Naive thymus-derived CD4-positive, alpha-beta T cell (primary cell): ENCODE measurements at regions of chr1 and their contacts with region 1.

Region 1: DNA sequence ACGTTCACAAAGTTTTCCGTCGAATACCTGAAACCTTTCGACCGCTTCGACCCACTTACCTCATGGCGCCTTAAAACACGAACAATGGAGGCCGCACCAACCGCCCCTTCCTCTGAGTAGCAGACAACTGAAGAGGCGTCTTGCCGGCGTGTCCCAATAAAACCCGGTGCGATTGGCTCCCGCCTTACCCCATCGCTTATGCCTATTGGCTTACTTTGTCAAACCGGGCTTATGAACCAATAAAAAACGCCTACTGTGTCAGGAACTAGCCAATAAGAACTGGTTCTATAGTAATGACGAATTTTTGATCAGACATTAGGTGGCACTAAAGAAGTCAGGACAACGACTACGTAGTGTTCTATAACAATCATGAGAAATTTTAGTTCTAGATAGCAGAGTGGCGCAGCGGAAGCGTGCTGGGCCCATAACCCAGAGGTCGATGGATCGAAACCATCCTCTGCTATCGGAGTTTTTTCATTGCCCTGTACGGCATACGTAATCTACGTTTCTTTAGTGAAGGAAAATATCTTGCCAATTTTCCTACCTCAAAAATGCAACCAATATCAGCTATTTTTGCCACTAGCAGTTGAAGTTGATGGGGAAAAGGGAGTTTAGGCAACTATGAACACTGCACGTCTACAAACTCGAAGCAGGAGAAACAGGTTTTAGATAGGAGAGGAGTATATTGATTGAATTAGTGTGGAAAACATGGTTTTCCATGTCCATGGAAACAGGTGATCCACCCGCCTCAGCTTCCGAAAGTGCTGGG is at the start of gene ILF2:
- DNase-seq: peak; percentile 85 to 100 (median 98)
- ATAC-seq: peak; percentile 93
- H3K4me3 ChIP-seq: peak within 1 kb of the TSS; percentile 94
- H3K4me3 Mint-ChIP-seq: no peak within 1 kb of the TSS
- H3K27ac ChIP-seq: peak within 1 kb of the TSS; percentile 93
- H3K27ac Mint-ChIP-seq: peak within 1 kb of the TSS in 2 of 9 donors; percentile 62 to 73
- H3K4me1 ChIP-seq: peaks cover 18 to 19% of the 10 kb centered on the region in 2 donors
- H3K4me1 Mint-ChIP-seq: peaks cover 11 to 28% (median 17%) of the 10 kb centered on the region in 7 donors
- H3K27me3 ChIP-seq: no peaks in the 10 kb centered on the region
- H3K27me3 Mint-ChIP-seq: peaks cover 0 to under 1% (median 0%) of the 10 kb centered on the region in 5 donors
- total RNA-seq, gene ILF2: 83.6 to 177 (median 113) TPM

Region 2: GRCh38 chr1:153565331-153566131 is 105.5 kb before region 1 on chr1 and contains the start of gene S100A2:
- CTCF ChIA-PET with region 1: no interaction called
- POLR2A ChIA-PET with region 1: no interaction called
- intact Hi-C with region 1: no loop called
- DNase-seq: peak in 1 of 9 donors; percentile 48
- ATAC-seq: peak; percentile 69
- H3K4me3 ChIP-seq: no peak within 1 kb of the TSS
- H3K4me3 Mint-ChIP-seq: peak within 1 kb of the TSS in 7 of 10 donors; percentile 32 to 81 (median 56)
- H3K27ac ChIP-seq: peak within 1 kb of the TSS; percentile 17
- H3K27ac Mint-ChIP-seq: peak within 1 kb of the TSS; percentile 56 to 98 (median 85)
- H3K4me1 ChIP-seq: peaks cover 12 to 13% of the 10 kb centered on the region in 2 donors
- H3K4me1 Mint-ChIP-seq: peaks cover 25 to 36% (median 28%) of the 10 kb centered on the region in 7 donors
- H3K27me3 ChIP-seq: no peaks in the 10 kb centered on the region
- H3K27me3 Mint-ChIP-seq: no peaks in the 10 kb centered on the region
- total RNA-seq, gene S100A2: 1.1 TPM in 1 of 5 experiments, not detected in the others

Region 3: DNA sequence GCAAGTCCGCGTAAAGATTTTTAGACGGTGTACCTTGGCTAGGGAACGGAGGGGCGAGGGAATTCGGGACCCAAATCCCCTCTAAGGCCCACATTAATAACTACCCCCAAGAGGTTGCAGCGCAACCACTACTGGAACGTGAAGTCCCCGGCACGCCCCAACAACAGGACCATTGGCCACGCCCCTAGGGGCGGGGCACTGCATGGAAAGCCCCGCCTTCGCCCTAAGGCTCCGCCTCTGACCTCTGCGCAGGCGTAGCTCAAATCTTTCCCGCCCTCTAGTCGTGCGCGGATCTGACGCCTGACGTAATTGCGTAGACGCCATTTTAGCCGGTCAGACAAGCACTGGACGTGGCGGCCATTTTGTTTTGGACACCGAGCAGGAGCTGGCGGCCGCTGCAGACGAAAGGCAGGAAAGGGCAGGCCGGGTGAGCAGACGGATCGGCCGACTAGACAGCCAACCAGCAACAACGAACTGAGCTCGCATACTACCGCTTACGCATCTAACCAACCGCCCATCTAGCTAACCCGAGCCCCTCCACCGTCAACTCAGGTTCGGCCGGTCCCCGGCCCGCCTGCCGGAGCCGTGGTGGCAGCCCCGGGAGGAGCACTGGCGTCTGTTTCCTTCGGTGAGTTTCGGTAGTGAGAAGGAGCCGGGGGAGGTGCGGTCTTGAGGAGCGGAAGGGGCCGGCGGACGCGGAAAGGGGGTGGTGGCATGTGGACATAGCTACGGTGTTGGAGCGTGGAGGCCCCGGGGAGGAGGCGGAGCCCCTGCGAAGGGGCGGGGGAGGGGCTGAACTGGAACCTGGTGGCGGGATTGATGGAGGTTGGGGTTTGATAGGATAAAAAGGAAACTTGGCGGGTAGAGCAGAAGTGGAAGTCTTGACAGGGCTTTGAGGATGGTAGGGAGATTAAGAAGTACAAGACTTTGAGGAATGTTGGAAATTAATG is 37.1 kb before region 1 on chr1 and contains the start of gene CHTOP:
- CTCF ChIA-PET with region 1: interaction called, 3 read pairs
- POLR2A ChIA-PET with region 1: interaction called, 21 read pairs
- intact Hi-C with region 1: loop called (anchors 1 kb)
- DNase-seq: peak; percentile 96 to 99 (median 96)
- ATAC-seq: peak; percentile 95
- H3K4me3 ChIP-seq: peak within 1 kb of the TSS; percentile 99
- H3K4me3 Mint-ChIP-seq: peak within 1 kb of the TSS; percentile 97 to 100 (median 99)
- H3K27ac ChIP-seq: peak within 1 kb of the TSS; percentile 98
- H3K27ac Mint-ChIP-seq: peak within 1 kb of the TSS; percentile 98 to 100 (median 100)
- H3K4me1 ChIP-seq: peaks cover 11 to 25% of the 10 kb centered on the region in 2 donors
- H3K4me1 Mint-ChIP-seq: peaks cover 30 to 52% (median 41%) of the 10 kb centered on the region in 7 donors
- H3K27me3 ChIP-seq: no peaks in the 10 kb centered on the region
- H3K27me3 Mint-ChIP-seq: peaks cover 0 to 3% (median 0%) of the 10 kb centered on the region in 5 donors
- total RNA-seq, gene CHTOP: 85.2 to 143 (median 116) TPM

Region 4: DNA sequence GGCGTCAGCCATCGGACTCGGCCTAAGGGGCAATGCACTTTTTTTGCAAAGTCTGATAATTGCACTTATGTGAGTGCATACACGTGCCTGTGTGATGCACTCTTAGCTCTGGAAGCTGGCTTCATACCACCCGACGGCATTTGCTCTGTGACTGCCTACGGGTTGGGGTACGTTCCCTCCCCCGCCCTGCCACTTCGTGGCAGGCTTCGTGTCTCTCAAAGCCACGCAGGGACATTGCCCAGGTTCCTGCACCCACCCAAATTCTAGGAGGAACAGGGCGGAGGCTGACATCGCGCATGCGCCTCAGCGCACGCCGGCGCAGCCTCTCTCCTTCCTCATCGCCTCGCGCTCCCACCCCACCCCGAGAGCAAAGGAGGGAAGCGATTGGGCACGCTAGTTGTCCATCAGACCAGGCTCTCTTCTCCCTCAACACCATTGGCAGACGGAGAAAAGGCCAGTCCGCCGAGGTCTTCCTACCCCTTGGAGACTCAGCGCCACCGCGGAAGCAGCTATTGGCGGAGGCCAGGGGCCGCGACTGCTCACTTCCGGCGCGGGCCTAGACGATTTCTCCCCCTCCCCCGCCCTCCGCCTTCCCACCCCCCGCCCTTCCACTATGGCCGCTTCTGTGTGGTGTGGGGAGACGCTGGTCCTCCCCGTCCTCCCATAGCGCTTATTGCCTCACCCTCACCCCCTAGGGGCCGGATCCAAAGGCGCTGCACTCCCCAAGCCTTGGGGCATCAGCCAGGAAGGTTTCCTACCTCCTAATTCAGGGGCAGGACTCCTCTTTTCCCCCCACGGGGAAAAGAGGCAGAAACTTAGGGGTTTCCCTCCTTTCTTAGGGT is 56.6 kb after region 1 on chr1 and contains the start of gene INTS3:
- CTCF ChIA-PET with region 1: interaction called, 4 read pairs
- POLR2A ChIA-PET with region 1: interaction called, 10 read pairs
- intact Hi-C with region 1: loop called (anchors 1 kb)
- DNase-seq: peak; percentile 84 to 100 (median 99)
- ATAC-seq: peak; percentile 99
- H3K4me3 ChIP-seq: peak within 1 kb of the TSS; percentile 92
- H3K4me3 Mint-ChIP-seq: peak within 1 kb of the TSS; percentile 82 to 97 (median 92)
- H3K27ac ChIP-seq: peak within 1 kb of the TSS; percentile 94
- H3K27ac Mint-ChIP-seq: peak within 1 kb of the TSS; percentile 89 to 98 (median 95)
- H3K4me1 ChIP-seq: peaks cover 11 to 15% of the 10 kb centered on the region in 2 donors
- H3K4me1 Mint-ChIP-seq: peaks cover 7 to 35% (median 32%) of the 10 kb centered on the region in 7 donors
- H3K27me3 ChIP-seq: no peaks in the 10 kb centered on the region
- H3K27me3 Mint-ChIP-seq: peaks cover 0 to 2% (median 0%) of the 10 kb centered on the region in 5 donors
- total RNA-seq, gene INTS3: 43.6 to 68.1 (median 56.8) TPM

Region 5: DNA sequence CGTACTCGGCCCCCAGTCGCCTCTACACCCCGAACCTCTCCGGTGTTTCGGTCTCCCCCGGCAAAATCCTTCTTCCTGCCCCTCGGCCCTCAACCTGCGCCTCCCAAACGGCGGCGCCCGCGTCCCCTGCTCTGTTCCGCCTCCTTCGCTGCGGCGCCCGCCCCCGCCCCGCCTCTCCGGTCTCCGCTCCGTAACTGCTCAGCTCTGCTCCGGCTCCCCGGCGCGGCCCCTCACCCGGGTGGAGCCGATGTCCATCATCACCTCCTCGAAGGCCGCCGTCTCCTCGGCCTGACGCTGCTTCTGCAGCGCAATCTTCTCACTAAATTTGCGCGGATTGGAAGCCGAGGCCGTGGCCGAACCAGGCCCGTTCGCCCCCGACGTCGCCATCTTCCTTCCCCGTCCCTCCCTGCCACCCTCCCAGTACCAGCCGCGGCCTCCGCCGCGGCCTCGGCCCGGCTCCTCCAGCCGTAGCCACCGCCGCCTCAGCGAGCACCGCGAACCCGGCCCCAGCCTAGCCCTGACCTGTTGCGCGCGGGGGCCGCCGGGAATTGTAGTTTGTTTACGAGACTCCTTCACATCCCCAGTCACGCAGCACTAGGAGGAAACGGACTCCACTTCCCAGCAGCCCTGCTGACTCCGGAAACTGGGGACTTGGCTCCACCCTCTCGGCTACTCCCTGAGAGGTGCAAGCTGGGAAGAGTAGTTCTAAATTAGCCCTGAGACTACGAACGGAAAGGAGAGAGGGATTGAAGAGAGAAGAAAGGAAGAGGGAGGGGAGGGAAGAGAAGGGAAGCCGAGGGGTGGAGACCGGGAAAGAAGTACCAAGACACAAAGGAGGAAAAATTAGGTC is 287.3 kb after region 1 on chr1 and contains the start of gene CRTC2:
- CTCF ChIA-PET with region 1: no interaction called
- POLR2A ChIA-PET with region 1: interaction called, 5 read pairs
- intact Hi-C with region 1: loop called in 1 of 2 experiments (anchors 1 kb)
- DNase-seq: peak; percentile 86 to 99 (median 96)
- ATAC-seq: peak; percentile 94
- H3K4me3 ChIP-seq: peak within 1 kb of the TSS; percentile 74
- H3K4me3 Mint-ChIP-seq: peak within 1 kb of the TSS; percentile 91 to 100 (median 97)
- H3K27ac ChIP-seq: peak within 1 kb of the TSS; percentile 92
- H3K27ac Mint-ChIP-seq: peak within 1 kb of the TSS; percentile 89 to 98 (median 94)
- H3K4me1 ChIP-seq: peaks cover 36% of the 10 kb centered on the region in 2 donors
- H3K4me1 Mint-ChIP-seq: peaks cover 34 to 71% (median 67%) of the 10 kb centered on the region in 7 donors
- H3K27me3 ChIP-seq: no peaks in the 10 kb centered on the region
- H3K27me3 Mint-ChIP-seq: no peaks in the 10 kb centered on the region
- total RNA-seq, gene CRTC2: 86.1 to 157 (median 119) TPM

Region 6: DNA sequence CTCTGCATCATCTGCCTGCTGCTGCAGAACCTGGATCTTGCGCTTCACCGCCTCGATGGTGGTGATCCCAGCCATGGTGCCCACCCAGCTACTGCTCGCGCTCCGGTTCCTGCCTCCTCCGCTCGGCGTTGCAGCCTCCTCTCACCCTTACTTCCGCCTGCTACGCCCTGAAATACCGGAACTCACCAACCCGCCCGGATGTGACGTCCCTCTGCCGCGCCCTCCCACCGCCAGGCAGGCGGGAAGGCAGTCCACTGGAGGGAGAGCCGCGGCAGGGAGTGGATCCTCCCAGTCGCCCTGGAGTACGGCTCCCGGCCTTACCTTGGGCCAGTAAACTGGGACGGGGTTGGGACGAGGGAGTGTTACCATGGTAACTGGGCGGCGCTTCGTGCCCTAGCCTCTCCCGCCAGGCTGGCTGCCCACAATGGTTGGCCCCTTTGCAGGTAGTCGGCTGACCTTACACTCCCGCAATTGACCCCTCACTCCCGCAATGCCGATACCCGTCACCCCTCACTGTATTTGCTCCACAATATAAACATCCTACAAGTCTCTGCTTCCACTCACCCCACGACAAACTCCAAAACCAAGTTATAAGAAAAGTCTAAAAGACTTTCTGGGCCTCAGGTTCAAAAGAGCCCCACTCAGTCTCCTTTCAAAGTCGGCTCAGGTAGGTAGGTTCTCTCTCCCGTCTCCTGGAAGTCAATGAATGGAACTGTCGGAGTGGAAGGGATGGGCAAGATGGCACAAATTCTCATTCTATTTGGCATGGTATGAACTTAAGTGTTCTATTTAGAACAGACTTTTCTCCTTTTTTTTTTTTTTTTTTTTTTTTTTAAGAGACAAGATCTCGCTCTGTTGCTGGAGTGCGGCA is 512.2 kb after region 1 on chr1:
- CTCF ChIA-PET with region 1: no interaction called
- POLR2A ChIA-PET with region 1: no interaction called
- intact Hi-C with region 1: loop called in 1 of 2 experiments (anchors 5 kb)
- DNase-seq: peak; percentile 84 to 94 (median 94)
- ATAC-seq: peak; percentile 89
- H3K4me3 ChIP-seq: peak overlapping the region; percentile 93
- H3K4me3 Mint-ChIP-seq: peak overlapping the region; percentile 98 to 100 (median 100)
- H3K27ac ChIP-seq: peak overlapping the region; percentile 95
- H3K27ac Mint-ChIP-seq: peak overlapping the region; percentile 98 to 100 (median 99)
- H3K4me1 ChIP-seq: peaks cover 25 to 44% of the 10 kb centered on the region in 2 donors
- H3K4me1 Mint-ChIP-seq: peaks cover 44 to 49% (median 48%) of the 10 kb centered on the region in 7 donors
- H3K27me3 ChIP-seq: no peaks in the 10 kb centered on the region
- H3K27me3 Mint-ChIP-seq: peaks cover 0 to 7% (median 0%) of the 10 kb centered on the region in 5 donors